ENCODE measurements at regions of chr3 and their contacts with region 1.

Region 1: GRCh38 chr3:168047190-168047795 is 48.4 kb downstream of the GOLIM4 start:
- DNase-seq: no peak
- H3K4me3 Mint-ChIP-seq: no peak overlapping the region
- H3K27ac Mint-ChIP-seq: no peak overlapping the region
- H3K4me1 Mint-ChIP-seq: no peaks in the 10 kb centered on the region
- H3K27me3 Mint-ChIP-seq: peaks cover 9% of the 10 kb centered on the region

Region 2: DNA sequence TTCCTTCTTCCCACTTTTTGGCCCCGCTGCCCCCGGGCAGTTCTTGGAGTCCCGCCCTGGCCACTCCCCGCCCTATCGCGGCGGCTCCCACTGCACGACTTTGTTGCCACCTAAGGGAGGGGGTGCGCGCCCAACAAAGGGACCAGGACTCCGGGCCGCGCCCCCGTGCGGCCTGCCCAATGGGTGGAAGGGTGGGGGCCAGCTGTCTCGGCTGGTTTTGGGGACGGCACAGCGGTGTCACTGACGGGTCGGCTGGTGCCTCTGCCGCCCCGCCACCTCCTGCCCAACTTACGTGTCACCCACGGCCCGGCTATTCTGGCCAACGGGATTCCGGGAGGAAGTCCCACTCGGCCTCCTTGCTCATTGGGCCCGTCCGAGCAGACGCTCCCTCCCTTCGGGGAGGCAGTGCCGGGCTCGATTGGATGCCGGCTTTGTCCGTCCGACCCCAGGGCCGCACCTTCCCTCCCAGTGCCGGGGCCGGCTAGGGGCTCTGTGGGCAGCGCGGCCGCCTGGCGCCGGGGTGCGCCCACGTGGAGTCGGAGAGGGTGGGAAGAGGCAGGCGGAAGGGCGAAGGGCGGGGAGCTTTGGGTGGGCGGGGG is 48.4 kb after region 1 on chr3 and contains the start of gene GOLIM4:
- CTCF ChIA-PET with region 1: interaction called, 3 read pairs
- intact Hi-C with region 1: loop called (anchors 1 kb)
- DNase-seq: peak; percentile 55
- H3K4me3 Mint-ChIP-seq: peak within 1 kb of the TSS; percentile 80
- H3K27ac Mint-ChIP-seq: no peak within 1 kb of the TSS
- H3K4me1 Mint-ChIP-seq: peaks cover 7% of the 10 kb centered on the region
- H3K27me3 Mint-ChIP-seq: peaks cover 48% of the 10 kb centered on the region
- total RNA-seq, gene GOLIM4: 0.67 to 0.98 TPM

Region 3: DNA sequence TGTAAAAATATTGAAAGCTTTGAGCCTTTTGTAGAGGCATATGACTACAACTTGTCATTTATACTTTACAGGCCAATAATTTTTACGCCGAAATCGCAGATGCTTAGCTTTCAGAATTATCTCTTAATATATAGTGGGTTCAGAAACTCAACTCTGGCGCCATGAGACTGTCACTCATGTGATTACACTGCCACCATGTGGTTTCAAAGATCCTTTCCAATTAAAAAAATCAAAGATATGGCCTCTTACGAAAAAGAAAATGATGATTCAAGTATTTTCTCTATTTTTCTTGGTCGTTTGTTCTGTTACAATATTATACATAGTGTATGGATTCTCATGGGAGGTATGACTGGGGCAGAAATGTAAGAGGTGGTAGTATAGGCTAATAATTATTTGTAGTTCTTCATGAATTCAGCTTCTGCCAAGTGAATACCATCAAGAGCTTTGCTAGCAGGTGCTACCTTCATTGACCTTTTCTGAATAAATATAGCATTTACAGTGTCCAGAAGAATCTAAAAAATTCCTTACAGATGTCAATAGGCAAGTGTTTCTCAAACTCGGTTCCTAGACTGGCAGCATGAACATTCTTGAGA is 800.1 kb after region 1 on chr3:
- CTCF ChIA-PET with region 1: interaction called, 4 read pairs
- intact Hi-C with region 1: loop called (anchors 1 kb)
- DNase-seq: no peak
- H3K4me3 Mint-ChIP-seq: no peak overlapping the region
- H3K27ac Mint-ChIP-seq: no peak overlapping the region
- H3K4me1 Mint-ChIP-seq: no peaks in the 10 kb centered on the region
- H3K27me3 Mint-ChIP-seq: peaks cover 3% of the 10 kb centered on the region